ENCODE measurements at regions of chr2 and their contacts with region 1.

Region 1: DNA sequence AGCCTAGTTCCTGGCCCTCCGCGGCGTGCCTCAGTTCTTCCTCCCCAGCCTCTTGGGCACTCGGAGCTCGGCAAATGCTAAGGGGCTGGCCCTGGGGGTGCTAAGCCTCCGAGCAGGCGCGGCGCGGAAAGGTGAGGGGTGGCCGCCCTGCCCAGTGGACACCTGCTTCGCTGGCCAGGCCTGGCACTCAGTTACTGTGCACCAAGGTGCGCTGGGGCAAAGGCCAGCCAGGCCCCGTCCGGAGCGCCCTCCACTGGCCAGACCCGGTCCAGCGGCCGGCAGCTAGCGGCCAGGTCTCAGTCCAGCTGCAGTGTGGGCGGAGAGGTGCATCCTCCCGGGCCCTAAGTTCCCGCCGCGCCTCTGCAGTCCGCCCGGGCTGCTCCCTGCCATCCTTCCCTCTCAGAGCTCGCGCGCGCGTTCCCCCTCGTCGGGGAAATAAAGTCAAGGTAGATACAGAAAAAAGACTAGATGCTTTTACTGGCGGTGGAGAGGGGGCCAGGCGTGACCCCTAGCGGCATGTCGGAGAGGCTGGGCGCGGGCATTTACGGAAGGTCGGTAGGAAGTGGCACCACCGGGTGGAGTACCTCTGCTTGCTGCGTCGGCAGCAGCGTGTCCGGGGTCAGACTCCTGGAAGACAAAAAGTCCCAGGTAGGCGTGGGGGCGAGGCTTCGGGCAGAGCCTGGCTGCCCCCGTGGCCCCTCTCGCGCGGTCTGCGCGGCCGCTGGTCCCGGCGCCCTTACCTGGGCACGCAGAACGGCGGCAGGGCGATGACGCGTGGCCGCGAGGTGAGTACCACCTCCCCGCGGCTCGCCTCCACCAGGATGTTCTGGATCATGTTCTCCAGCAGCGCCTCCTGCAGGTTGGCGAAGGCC is 9.4 kb upstream of the CRYBA2 start:
- DNase-seq: peak in 1 of 2 experiments; percentile 85
- H3K4me3 ChIP-seq: peak overlapping the region; percentile 67
- H3K4me3 Mint-ChIP-seq: peak overlapping the region; percentile 79
- H3K27ac Mint-ChIP-seq: no peak overlapping the region
- H3K4me1 ChIP-seq: peaks cover 25% of the 10 kb centered on the region
- H3K4me1 Mint-ChIP-seq: peaks cover 15% of the 10 kb centered on the region
- H3K27me3 ChIP-seq: no peaks in the 10 kb centered on the region
- H3K27me3 Mint-ChIP-seq: peaks cover 7% of the 10 kb centered on the region
- CTCF ChIP-seq: peak; percentile 48 to 77

Region 2: GRCh38 chr2:218788529-218789255 is 213.9 kb before region 1 on chr2:
- CTCF ChIA-PET with region 1: no interaction called
- POLR2A ChIA-PET with region 1: no interaction called
- intact Hi-C with region 1: no loop called
- DNase-seq: no peak
- H3K4me3 ChIP-seq: no peak overlapping the region
- H3K4me3 Mint-ChIP-seq: no peak overlapping the region
- H3K27ac Mint-ChIP-seq: no peak overlapping the region
- H3K4me1 ChIP-seq: 0 out of 2 replicates have a peak, but pooled peaks cover 4% of the 10 kb centered on the region
- H3K4me1 Mint-ChIP-seq: peaks cover 10% of the 10 kb centered on the region
- H3K27me3 ChIP-seq: no peaks in the 10 kb centered on the region
- H3K27me3 Mint-ChIP-seq: no peaks in the 10 kb centered on the region
- CTCF ChIP-seq: no peak

Region 3: DNA sequence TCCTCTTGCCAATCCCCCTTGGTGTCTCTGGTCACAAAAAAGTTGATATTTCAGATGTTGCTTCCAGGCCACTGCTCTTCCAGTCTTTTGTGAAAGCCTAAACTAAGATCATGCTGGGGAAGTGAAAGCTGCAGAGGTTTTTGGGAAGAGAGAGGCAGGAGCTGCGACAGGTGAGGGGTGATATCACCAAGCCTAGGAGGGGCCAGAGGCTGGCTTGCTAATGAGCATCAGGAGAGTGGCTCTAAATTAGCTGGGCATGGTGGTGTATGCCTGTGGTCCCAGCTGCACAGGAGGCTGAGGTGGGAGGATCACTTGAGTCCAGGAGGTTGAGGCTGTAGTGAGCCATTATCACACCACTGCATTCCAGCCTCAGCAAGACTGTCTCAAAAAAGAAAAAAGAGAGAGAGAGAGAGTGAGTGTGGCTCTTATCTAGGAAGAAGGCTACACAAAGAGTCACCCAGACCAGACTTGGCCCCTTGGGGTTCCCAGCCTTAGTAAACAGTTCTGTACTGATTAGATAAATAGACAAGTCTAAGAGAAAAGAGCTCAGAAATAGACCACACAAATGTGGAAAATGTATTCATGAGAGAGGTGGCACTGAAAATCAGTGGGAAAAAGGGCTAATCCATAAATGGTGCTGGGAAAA is 57.7 kb before region 1 on chr2:
- CTCF ChIA-PET with region 1: no interaction called
- POLR2A ChIA-PET with region 1: no interaction called
- intact Hi-C with region 1: no loop called
- DNase-seq: no peak
- H3K4me3 ChIP-seq: no peak overlapping the region
- H3K4me3 Mint-ChIP-seq: no peak overlapping the region
- H3K27ac Mint-ChIP-seq: no peak overlapping the region
- H3K4me1 ChIP-seq: no peaks in the 10 kb centered on the region
- H3K4me1 Mint-ChIP-seq: no peaks in the 10 kb centered on the region
- H3K27me3 ChIP-seq: no peaks in the 10 kb centered on the region
- H3K27me3 Mint-ChIP-seq: peaks cover 13% of the 10 kb centered on the region
- CTCF ChIP-seq: no peak

Region 4: GRCh38 chr2:218990052-218990451 is 12.6 kb before region 1 on chr2:
- CTCF ChIA-PET with region 1: interaction called, 11 read pairs
- POLR2A ChIA-PET with region 1: no interaction called
- intact Hi-C with region 1: no loop called
- DNase-seq: peak in 1 of 2 experiments; percentile 14
- H3K4me3 ChIP-seq: no peak overlapping the region
- H3K4me3 Mint-ChIP-seq: no peak overlapping the region
- H3K27ac Mint-ChIP-seq: no peak overlapping the region
- H3K4me1 ChIP-seq: peaks cover 3% of the 10 kb centered on the region
- H3K4me1 Mint-ChIP-seq: no peaks in the 10 kb centered on the region
- H3K27me3 ChIP-seq: peaks cover 6% of the 10 kb centered on the region
- H3K27me3 Mint-ChIP-seq: peaks cover 36% of the 10 kb centered on the region
- CTCF ChIP-seq: no peak

Measured in Caco-2 (cell line).